ENCODE measurements at regions of chr12 and their contacts with region 1.

Region 1: DNA sequence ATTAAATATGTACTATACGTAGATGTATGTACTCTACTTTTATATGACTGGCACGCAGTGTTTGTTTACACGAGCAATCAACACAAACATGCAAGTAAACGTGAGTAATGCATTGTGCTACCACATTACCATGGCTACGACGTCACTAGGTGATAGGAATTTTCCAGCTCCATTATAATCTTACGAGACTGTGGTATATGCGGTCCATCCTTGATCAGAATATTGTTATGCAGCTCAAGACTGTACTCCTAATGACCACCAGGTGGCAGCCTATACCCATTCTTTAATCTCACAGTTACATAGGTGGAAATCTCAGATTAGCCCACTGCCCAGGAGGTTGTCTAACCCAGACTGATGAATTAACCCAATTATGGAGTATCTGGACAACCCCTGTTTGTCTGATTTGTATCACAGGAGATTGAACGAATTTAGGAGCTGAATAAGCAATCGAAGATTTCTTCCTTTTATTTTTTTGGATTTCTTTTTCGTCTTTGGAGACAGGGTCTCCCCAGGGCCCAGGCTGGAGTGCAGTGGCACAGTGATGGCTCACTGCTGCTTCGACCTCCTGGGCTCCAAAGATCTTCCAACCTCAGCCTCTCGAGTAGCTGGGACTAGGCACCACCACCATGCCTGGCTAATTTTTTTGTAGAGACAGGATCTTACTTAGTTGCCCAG is 8.7 kb upstream of the TESPA1 start:
- DNase-seq: peak; percentile 64
- CTCF ChIP-seq: peak; percentile 58

Region 2: DNA sequence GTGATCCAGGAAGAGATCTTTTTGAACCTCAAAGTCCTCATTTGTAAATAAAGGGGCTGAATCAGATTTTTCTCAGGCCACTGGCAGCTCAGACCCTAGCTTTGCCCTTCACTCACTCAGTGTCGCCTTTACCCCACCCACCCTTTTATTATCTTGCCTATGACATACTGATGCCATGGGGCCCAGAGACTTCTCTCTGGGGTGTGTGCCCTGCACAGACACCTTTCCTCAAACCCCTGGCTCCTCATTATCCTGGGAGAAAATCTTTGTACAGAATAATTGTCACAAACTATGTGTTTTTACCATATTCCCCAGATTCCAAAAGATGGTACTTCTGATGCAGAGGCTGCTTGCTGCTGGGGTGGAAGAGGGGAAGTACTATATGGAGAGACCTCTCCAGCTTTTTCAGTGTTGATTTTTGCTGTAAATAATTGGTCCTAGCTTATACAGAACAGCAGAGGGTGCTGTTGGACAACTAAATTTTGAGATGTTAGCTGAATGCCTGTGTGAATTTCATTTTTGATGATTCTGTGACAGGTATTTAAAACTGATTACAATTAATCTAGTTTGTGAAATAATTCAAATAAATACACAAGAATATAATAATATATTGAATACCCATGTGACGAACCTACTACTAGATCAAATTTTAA is 291.2 kb before region 1 on chr12:
- CTCF ChIA-PET with region 1: interaction called, 11 read pairs
- POLR2A ChIA-PET with region 1: no interaction called
- DNase-seq: peak; percentile 42
- CTCF ChIP-seq: peak; percentile 51

Region 3: DNA sequence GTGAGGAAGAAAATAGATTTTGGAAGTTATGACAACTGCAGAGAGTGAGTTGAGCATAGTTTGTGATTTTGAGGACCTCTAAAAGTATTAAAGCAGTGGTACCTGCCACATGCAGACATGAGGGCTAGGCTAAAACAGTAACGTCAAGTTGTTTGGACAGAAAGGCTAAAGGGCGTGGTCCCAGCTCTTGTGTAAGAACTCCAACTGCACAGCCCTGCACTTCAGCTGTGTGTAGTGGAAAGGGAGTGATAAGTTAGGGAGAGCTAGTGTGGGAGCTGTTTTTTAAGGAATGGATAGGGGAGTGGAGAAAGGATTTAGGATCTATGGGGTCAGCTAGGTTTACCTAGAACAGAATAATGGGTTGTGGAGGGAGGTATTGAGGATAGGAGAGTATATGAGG is 48.2 kb before region 1 on chr12:
- CTCF ChIA-PET with region 1: no interaction called
- POLR2A ChIA-PET with region 1: no interaction called
- DNase-seq: no peak
- CTCF ChIP-seq: no peak

Region 4: GRCh38 chr12:54958048-54958658 is 35.1 kb before region 1 on chr12:
- CTCF ChIA-PET with region 1: interaction called, 16 read pairs
- POLR2A ChIA-PET with region 1: no interaction called
- DNase-seq: peak; percentile 40
- CTCF ChIP-seq: peak; percentile 75

Region 5: DNA sequence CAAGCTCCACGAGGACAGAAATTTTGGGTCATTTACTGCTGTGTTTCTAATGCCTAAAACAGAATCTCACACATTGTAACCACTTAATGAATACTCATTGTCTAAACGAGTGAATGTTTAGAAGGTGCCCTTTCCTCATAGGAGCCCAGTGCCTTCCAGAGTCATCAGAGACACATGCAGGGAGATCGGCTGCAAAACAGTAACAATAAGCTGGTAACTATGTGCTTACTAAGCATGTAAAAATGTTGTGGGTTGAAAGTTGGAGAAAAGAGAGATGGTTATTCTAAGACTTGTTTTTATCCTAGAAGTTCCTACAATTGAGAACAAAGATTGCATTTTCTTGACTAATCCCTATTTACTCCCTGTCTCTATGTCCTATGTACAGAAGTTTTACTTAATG is 16.1 kb before region 1 on chr12:
- CTCF ChIA-PET with region 1: interaction called, 51 read pairs
- POLR2A ChIA-PET with region 1: interaction called, 3 read pairs
- DNase-seq: no peak
- CTCF ChIP-seq: no peak

Region 6: GRCh38 chr12:55043542-55043941 is 50.2 kb after region 1 on chr12:
- CTCF ChIA-PET with region 1: interaction called, 11 read pairs
- POLR2A ChIA-PET with region 1: no interaction called
- DNase-seq: no peak
- CTCF ChIP-seq: no peak

Region 7: GRCh38 chr12:55196188-55196587 is 202.9 kb after region 1 on chr12:
- CTCF ChIA-PET with region 1: no interaction called
- POLR2A ChIA-PET with region 1: no interaction called
- DNase-seq: no peak
- CTCF ChIP-seq: no peak